ENCODE measurements at regions of chr7 and their contacts with region 1.

Region 1: DNA sequence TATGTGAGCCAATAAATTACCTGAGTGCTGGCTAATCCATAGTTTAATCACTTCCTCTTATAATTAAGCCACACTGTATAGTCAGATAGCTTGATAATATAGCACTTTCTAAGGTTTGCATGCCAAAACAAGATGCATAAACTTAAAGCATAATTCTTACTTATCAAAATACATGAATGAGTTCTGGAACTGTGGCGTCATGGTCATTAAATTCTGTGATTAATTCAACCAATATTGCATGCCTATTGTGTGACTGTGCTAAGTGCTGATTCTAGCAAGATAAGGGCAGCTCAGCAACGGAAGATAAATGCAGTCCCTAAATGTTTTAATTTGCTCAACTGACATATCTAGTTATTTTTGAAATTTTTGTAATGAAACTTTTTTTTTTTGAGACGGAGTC is 29.7 kb downstream of the HOXA1 start:
- DNase-seq: no peak
- ATAC-seq: no peak
- H3K4me3 ChIP-seq: no peak overlapping the region
- H3K27ac ChIP-seq: no peak overlapping the region
- H3K4me1 ChIP-seq: no peaks in the 10 kb centered on the region
- H3K27me3 ChIP-seq: no peaks in the 10 kb centered on the region
- CTCF ChIP-seq: no peak

Region 2: GRCh38 chr7:27031289-27032172 is 34.6 kb before region 1 on chr7:
- intact Hi-C with region 1: loop called in 1 of 2 experiments (anchors 5 kb)
- DNase-seq: no peak
- ATAC-seq: peak; percentile 76 to 98 (median 95)
- H3K4me3 ChIP-seq: no peak overlapping the region
- H3K27ac ChIP-seq: peak overlapping the region; percentile 69
- H3K4me1 ChIP-seq: peaks cover 20% of the 10 kb centered on the region
- H3K27me3 ChIP-seq: no peaks in the 10 kb centered on the region
- CTCF ChIP-seq: no peak

Measured in psoas muscle (tissue), 8 donors.